T-cell (primary cell): ENCODE measurements at regions of chr11 and their contacts with region 1.

Region 1: DNA sequence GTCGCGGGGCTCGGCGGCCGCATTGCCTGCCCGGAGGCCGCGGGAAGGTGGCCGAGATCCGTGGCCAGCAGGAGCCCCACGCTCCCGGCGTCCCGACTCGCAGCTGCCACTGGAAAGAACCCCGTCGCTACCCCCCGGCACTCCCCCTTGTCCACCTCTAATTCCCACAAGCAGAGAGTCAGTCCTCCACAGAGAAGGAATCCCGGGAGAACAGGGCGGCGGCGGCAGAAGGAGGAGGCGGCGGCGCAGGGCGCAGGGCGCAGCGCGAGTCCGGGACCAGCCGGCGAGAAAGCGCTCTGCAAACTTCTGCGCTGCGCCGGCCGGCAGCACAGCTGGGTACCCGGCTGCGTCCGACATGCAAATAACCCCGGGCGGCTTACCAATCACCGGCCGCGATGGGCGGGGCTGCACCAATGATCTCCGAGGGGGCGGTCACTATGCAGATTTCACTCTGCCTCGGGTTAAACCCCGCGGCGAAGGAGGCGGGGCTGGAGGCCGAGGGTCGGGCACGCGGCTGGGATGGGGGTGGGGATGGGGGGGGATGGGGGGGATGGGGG is at the start of gene ABTB2:
- DNase-seq: peak; percentile 90 to 98 (median 97)
- ATAC-seq: peak; percentile 89 to 93 (median 90)
- H3K4me3 ChIP-seq: peak within 1 kb of the TSS; percentile 74
- H3K4me3 Mint-ChIP-seq: peak within 1 kb of the TSS; percentile 76 to 83 (median 79)
- H3K27ac ChIP-seq: peak within 1 kb of the TSS; percentile 58
- H3K27ac Mint-ChIP-seq: peak within 1 kb of the TSS; percentile 56 to 79
- H3K4me1 ChIP-seq: peaks cover 0 to 29% of the 10 kb centered on the region in 2 experiments
- H3K4me1 Mint-ChIP-seq: peaks cover 21 to 29% (median 25%) of the 10 kb centered on the region in 3 donors
- H3K27me3 ChIP-seq: peaks cover 5 to 34% of the 10 kb centered on the region in 2 experiments
- H3K27me3 Mint-ChIP-seq: peaks cover 39 to 53% of the 10 kb centered on the region in 2 donors
- total RNA-seq, gene ABTB2: 0.50 to 0.93 (median 0.82) TPM

Region 2: GRCh38 chr11:33266393-33267215 is 1091.2 kb before region 1 on chr11:
- CTCF ChIA-PET with region 1: interaction called in 1 of 2 experiments, 11 read pairs
- POLR2A ChIA-PET with region 1: no interaction called
- DNase-seq: no peak
- ATAC-seq: no peak
- H3K4me3 ChIP-seq: no peak overlapping the region
- H3K4me3 Mint-ChIP-seq: no peak overlapping the region
- H3K27ac ChIP-seq: no peak overlapping the region
- H3K27ac Mint-ChIP-seq: no peak overlapping the region
- H3K4me1 ChIP-seq: peaks cover 0 to 21% of the 10 kb centered on the region in 2 experiments
- H3K4me1 Mint-ChIP-seq: peaks cover 38 to 52% (median 47%) of the 10 kb centered on the region in 3 donors
- H3K27me3 ChIP-seq: no peaks in the 10 kb centered on the region
- H3K27me3 Mint-ChIP-seq: no peaks in the 10 kb centered on the region

Region 3: DNA sequence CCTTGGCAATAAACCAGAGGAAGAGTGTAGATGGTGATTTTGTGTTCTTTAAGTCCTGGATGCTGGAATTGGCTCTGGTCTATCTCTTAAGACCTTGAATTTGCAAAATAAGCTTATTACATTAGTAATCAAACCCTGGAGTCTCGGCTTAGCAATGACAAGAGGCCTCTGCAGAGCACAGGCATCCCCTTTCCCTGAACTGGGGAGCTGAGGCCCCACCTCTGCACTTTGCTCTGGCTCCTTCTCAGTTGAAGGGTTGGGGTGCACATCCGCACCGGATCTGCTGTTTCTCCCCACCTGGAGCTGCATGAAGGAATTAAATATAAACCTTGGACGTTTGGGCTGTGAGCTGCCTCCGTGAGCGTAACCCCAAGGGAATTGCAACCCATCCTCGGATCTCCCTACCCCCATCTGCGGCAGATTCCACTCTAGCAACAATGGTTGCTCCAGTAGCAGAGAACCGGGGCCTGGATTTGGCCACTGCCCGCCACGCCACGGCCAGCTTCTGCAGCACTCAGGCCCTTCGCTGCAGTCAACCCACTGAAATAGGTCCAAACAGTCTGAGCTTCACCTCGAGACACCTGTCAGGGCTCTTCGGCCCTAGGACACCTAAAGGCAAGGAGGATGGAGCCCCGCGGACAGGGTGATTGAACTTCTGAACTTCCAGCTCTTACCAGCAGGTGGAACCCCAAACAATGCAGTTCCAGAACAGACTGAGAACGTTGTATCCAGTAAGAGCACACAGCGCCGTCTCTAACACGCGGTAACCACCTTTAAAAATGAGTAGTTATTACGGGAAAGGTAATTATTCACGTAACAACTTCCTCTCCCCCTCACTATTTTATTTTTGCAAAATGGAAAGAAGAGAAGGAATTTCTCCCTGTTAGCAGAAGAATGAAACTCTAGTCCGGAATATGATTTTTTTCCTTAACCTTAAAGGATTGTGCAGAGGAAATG is 361.0 kb before region 1 on chr11:
- CTCF ChIA-PET with region 1: interaction called, 3 to 12 read pairs
- POLR2A ChIA-PET with region 1: no interaction called
- DNase-seq: peak; percentile 34 to 85 (median 64)
- ATAC-seq: peak; percentile 99 to 100 (median 100)
- H3K4me3 ChIP-seq: no peak overlapping the region
- H3K4me3 Mint-ChIP-seq: peak overlapping the region in 2 of 3 donors; percentile 8 to 31
- H3K27ac ChIP-seq: no peak overlapping the region
- H3K27ac Mint-ChIP-seq: no peak overlapping the region
- H3K4me1 ChIP-seq: peaks cover 0 to 5% of the 10 kb centered on the region in 2 experiments
- H3K4me1 Mint-ChIP-seq: peaks cover 8 to 10% (median 10%) of the 10 kb centered on the region in 3 donors
- H3K27me3 ChIP-seq: peaks cover 0 to 20% of the 10 kb centered on the region in 2 experiments
- H3K27me3 Mint-ChIP-seq: peaks cover 14 to 26% of the 10 kb centered on the region in 2 donors

Region 4: GRCh38 chr11:34180040-34180813 is 177.6 kb before region 1 on chr11:
- CTCF ChIA-PET with region 1: interaction called, 6 to 10 read pairs
- POLR2A ChIA-PET with region 1: no interaction called
- DNase-seq: no peak
- ATAC-seq: no peak
- H3K4me3 ChIP-seq: no peak overlapping the region
- H3K4me3 Mint-ChIP-seq: no peak overlapping the region
- H3K27ac ChIP-seq: no peak overlapping the region
- H3K27ac Mint-ChIP-seq: no peak overlapping the region
- H3K4me1 ChIP-seq: no peaks in the 10 kb centered on the region
- H3K4me1 Mint-ChIP-seq: no peaks in the 10 kb centered on the region
- H3K27me3 ChIP-seq: peaks cover 0 to 3% of the 10 kb centered on the region in 2 experiments
- H3K27me3 Mint-ChIP-seq: no peaks in the 10 kb centered on the region